A549 (cell line): ENCODE measurements at regions of chr17 and their contacts with region 1.

Region 1: DNA sequence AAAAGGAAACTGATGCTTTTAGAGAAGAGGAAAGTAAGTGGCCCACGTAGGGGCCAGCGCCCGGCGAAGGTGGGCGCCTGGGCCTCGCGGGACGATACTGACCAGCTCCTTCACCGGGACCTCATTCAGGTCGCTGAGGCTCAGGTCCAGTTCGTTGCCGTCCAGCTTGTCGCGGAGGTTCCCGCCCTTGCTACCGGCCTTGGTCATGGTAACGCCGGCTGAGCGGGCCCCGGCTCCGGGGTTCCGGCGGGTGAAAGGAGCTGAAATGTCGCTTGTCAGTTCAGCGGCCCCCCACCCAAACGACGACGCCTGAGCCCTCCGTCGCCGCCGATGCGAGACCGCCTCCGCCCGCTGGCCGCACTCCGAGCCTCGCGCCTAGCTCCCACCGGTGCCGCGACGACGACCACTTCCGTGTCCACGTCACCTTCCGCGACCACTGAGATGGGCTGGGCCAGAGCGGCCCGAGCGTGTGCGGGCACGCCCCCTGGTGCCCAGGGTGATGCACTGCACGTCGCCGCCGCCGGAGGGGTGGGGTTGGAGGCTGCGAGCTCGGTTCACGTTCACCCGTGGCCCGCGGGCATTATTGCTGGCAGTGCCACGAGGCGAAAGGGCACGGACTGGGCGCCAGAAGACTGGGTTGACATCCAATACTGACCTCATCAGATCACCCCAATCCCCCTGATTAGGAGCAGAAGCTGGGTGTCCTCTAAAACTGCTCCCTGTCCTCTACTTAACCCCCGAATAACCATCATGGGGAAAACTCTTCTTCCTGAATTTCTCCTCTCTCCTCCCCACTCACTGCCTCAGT is at the start of gene LRRC59:
- DNase-seq: peak; percentile 83 to 91
- ATAC-seq: peak; percentile 93 to 95
- H3K4me3 ChIP-seq: peak within 1 kb of the TSS; percentile 88
- H3K27ac ChIP-seq: peak within 1 kb of the TSS; percentile 88 to 94
- H3K4me1 ChIP-seq: peaks cover 20% of the 10 kb centered on the region
- CTCF ChIP-seq: peak; percentile 91
- EP300 ChIP-seq: no peak
- POLR2A ChIP-seq: peak; percentile 91
- RAD21 ChIP-seq: peak; percentile 13 to 47; a peak in 3 of 5 replicates
- polyA plus RNA-seq, gene LRRC59: 228 and 237 TPM in 2 replicates

Region 2: GRCh38 chr17:50372758-50373556 is 24.4 kb before region 1 on chr17 and contains the starts of genes EME1 and MRPL27:
- CTCF ChIA-PET with region 1: interaction called, 445 read pairs
- POLR2A ChIA-PET with region 1: interaction called, 7 read pairs
- DNase-seq: peak; percentile 92 to 98
- ATAC-seq: peak; percentile 95 to 97
- H3K4me3 ChIP-seq: peak within 1 kb of the TSS; percentile 70
- H3K27ac ChIP-seq: peak within 1 kb of the TSS; percentile 94 to 95
- H3K4me1 ChIP-seq: peaks cover 14% of the 10 kb centered on the region; the same call in 2 of the 3 replicates
- CTCF ChIP-seq: no peak
- EP300 ChIP-seq: no peak
- POLR2A ChIP-seq: peak; percentile 85
- RAD21 ChIP-seq: no peak
- polyA plus RNA-seq, gene EME1: 26.3 and 29.9 TPM in 2 replicates
- polyA plus RNA-seq, gene MRPL27: 149 and 173 TPM in 2 replicates

Region 3: DNA sequence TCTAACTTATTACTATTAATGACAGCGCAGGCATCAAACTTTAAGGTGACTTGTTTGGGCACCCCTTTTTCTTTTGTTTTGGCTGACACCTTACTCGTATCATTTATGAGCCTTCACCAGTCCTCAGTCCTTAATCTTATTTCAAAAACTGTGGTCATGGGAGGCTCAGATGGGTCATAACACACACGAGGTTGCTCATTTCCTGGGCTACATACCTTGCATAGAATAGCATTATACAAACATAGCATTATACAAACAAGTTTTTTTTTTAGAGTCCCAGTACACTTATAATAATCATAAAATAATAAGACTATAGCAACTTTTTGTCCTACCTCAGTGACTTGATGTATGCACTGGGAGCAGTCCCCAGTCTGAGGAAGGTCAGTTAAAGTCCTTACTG is 17.5 kb after region 1 on chr17:
- CTCF ChIA-PET with region 1: interaction called, 59 read pairs
- POLR2A ChIA-PET with region 1: no interaction called
- DNase-seq: no peak
- ATAC-seq: no peak
- H3K4me3 ChIP-seq: no peak overlapping the region
- H3K27ac ChIP-seq: no peak overlapping the region
- H3K4me1 ChIP-seq: no peaks in the 10 kb centered on the region
- CTCF ChIP-seq: no peak
- EP300 ChIP-seq: no peak
- POLR2A ChIP-seq: no peak
- RAD21 ChIP-seq: no peak

Region 4: DNA sequence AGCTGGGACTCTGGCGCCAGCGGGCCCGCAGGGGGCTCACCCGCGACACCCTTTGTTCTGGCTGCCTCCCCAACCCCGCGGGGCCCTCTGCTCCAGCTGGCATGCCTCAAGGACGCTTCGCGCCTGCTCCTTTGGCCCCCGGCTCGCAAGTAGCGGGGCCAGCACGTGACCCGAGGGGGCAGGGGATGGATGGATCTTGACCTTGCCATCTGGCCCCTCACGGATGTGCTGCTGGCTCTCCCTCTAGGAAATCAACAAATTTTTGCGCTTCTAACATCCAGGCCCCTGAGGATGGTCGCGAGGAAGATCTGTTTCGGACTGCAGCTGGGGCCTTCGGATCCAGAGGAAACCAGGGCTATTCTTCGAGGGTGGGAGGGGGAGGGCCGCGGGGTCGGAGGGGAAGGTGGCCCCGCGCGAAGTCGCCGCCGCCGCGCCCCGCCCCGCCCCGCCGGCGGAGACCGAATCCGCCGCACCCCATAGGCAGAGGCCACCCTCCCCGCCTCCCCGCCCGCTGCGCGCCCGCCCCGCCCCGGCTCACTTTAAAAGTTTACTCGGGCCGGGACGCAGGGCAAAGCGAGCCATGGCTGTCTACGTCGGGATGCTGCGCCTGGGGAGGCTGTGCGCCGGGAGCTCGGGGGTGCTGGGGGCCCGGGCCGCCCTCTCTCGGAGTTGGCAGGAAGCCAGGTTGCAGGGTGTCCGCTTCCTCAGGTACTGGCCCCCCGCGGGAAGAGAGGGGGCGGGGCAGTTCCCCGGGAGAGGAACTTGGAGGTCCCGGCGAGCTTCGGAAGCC is 28.6 kb after region 1 on chr17 and contains the start of gene ACSF2:
- CTCF ChIA-PET with region 1: interaction called, 55 read pairs
- POLR2A ChIA-PET with region 1: interaction called, 5 read pairs
- DNase-seq: peak; percentile 50 to 87
- ATAC-seq: peak; percentile 84 to 90
- H3K4me3 ChIP-seq: peak within 1 kb of the TSS; percentile 72
- H3K27ac ChIP-seq: peak within 1 kb of the TSS; percentile 77 to 90
- H3K4me1 ChIP-seq: peaks cover 27% of the 10 kb centered on the region
- CTCF ChIP-seq: no peak
- EP300 ChIP-seq: no peak
- POLR2A ChIP-seq: no peak
- RAD21 ChIP-seq: no peak
- polyA plus RNA-seq, gene ACSF2: 28.9 and 33.6 TPM in 2 replicates

Region 5: DNA sequence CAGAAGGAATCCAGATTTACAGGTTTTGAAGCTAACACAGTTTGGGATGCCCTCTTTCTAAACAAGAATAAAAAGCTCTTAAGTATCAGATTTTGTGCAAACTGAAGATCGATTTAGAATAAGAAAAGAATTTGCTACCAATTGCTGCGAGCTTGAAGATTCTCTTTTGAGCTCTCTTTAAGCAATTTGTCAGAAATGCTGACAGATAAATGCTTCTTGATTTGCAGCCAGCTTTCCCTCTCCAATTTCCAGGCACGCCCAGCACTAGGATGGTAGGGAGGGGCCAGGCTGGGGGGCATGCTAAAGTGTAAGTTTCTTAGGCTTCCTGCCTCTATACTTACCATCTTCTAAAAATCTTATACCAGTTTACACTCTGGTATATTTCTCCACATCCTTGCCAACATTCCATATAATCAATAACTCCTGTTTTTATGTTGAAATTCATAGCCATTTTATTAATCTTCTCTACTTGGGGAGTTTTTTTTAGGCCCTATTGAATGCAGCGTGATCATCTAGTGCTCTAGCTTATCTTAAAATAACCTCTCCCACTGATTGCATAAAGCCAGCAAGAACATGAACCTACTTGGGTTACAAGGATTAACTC is 46.2 kb after region 1 on chr17:
- CTCF ChIA-PET with region 1: interaction called, 26 read pairs
- POLR2A ChIA-PET with region 1: interaction called, 3 read pairs
- DNase-seq: no peak
- ATAC-seq: no peak
- H3K4me3 ChIP-seq: no peak overlapping the region
- H3K27ac ChIP-seq: no peak overlapping the region
- H3K4me1 ChIP-seq: no peaks in the 10 kb centered on the region
- CTCF ChIP-seq: no peak
- EP300 ChIP-seq: no peak
- POLR2A ChIP-seq: no peak
- RAD21 ChIP-seq: no peak

Region 6: GRCh38 chr17:50468409-50469207 is 71.3 kb after region 1 on chr17 and contains the start of gene CHAD:
- CTCF ChIA-PET with region 1: interaction called, 27 read pairs
- POLR2A ChIA-PET with region 1: interaction called, 7 read pairs
- DNase-seq: no peak
- ATAC-seq: no peak
- H3K4me3 ChIP-seq: no peak within 1 kb of the TSS
- H3K27ac ChIP-seq: no peak within 1 kb of the TSS
- H3K4me1 ChIP-seq: peaks cover 16% of the 10 kb centered on the region
- CTCF ChIP-seq: no peak
- EP300 ChIP-seq: no peak
- POLR2A ChIP-seq: no peak
- RAD21 ChIP-seq: no peak
- polyA plus RNA-seq, gene CHAD: not detected in 2 replicates